Right lobe of liver (tissue), 6 donors: ENCODE measurements at regions of chr10 and their contacts with region 1.

Region 1: DNA sequence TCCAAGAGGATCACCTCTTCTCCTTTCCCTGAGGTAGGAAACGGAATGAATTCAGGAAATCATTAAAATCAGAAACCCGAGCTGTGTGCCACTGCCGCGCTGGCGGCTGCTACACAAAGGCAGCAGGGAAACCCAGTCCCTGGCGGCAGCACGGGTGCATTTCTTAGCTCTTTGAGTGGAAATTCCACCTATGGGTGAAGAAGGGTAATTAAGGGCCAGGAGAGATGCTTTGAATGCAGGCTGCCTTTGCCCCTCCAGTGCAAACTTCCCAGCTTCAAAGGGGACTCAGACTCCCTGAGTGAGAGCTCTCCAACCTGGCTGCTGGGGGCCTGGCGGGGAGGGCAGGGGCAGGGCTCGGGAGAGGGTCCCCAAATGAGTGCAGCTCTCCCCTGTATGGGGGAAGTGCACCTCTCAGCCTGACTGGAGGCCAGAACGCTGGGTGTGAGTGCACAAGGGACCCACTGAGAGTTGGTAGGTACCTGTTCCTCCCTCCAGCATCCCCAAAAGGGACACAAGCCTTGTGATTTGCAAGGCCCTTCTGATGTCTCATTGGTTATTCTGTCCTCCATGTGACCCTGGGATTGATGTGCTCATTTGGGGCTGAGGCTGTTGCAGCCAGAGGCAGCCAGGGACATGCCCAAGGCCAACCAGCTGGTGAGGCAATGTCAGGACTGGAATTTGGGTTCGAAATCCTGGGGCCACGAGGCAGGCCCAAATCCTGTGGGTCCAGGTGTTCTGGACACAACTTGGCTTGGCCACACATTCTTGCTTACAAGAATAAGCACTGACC is 16.3 kb upstream of the ZMIZ1 start:
- DNase-seq: peak; percentile 15 to 40 (median 33)
- ATAC-seq: peak in 1 of 4 donors; percentile 8
- H3K4me3 ChIP-seq: no peak overlapping the region
- H3K27ac ChIP-seq: no peak overlapping the region
- H3K4me1 ChIP-seq: peaks cover 0 to 12% (median 0%) of the 10 kb centered on the region in 4 donors
- H3K27me3 ChIP-seq: no peaks in the 10 kb centered on the region
- CTCF ChIP-seq: no peak
- POLR2A ChIP-seq: no peak

Region 2: DNA sequence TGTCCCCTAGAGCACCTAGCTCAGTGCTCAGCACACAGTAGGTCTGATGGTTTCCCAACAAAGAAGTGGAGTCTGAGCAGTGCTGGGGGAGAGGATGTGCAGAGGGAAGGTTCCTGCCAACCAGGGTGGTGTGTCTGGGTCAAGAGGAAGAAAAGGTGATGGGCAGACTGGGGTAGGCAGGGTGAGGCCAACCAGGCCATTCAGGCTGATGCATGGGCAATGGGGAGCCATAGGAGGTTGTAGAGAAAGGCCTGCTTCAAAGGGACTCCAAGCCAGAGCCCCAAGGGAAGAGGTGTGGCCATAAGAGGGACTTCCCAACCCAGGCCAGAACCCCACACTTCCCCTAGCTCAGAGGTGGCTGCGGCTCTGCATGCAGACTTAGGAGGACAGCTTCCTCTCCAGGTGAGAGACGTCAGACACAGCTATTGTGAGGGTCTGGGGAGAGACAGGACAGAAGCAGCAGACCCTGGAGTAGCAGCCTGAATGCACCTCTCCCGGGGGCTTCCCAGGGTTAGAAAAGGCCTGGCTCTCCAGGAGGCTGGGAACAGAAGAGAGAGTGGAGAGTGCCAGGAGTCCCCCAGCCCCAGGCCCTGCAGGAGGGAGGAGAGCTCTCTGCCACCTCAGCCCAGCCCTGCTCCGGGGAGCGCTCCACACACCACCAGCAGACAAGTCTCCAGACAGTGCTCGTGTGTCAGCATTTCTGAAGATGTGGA is 71.1 kb before region 1 on chr10:
- intact Hi-C with region 1: loop called in 1 of 2 experiments (anchors 10 kb)
- DNase-seq: no peak
- ATAC-seq: no peak
- H3K4me3 ChIP-seq: no peak overlapping the region
- H3K27ac ChIP-seq: no peak overlapping the region
- H3K4me1 ChIP-seq: peaks cover 0 to 23% (median 5%) of the 10 kb centered on the region in 4 donors
- H3K27me3 ChIP-seq: no peaks in the 10 kb centered on the region
- CTCF ChIP-seq: no peak
- POLR2A ChIP-seq: no peak

Region 3: DNA sequence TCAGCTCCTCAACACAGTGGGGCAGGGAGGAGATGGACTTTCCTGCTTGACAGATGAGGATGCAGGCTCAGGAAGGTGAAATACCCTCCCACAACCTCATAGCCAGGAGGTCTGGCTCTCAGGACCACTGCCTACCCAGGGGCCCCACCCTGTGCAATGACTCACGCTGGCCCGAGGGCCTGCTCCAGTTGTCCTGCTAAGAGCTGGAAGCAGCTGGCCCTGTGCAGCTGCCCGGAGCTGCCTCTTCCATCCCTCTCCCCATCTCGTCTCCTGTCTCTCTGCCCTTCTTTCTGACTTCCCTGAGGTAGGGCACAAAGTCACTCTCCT is 140.2 kb after region 1 on chr10:
- intact Hi-C with region 1: no loop called
- DNase-seq: no peak
- ATAC-seq: no peak
- H3K4me3 ChIP-seq: no peak overlapping the region
- H3K27ac ChIP-seq: no peak overlapping the region
- H3K4me1 ChIP-seq: peaks cover 0 to 20% (median 7%) of the 10 kb centered on the region in 4 donors
- H3K27me3 ChIP-seq: no peaks in the 10 kb centered on the region
- CTCF ChIP-seq: no peak
- POLR2A ChIP-seq: no peak